ENCODE measurements at regions of chr11 and their contacts with region 1.

Region 1: DNA sequence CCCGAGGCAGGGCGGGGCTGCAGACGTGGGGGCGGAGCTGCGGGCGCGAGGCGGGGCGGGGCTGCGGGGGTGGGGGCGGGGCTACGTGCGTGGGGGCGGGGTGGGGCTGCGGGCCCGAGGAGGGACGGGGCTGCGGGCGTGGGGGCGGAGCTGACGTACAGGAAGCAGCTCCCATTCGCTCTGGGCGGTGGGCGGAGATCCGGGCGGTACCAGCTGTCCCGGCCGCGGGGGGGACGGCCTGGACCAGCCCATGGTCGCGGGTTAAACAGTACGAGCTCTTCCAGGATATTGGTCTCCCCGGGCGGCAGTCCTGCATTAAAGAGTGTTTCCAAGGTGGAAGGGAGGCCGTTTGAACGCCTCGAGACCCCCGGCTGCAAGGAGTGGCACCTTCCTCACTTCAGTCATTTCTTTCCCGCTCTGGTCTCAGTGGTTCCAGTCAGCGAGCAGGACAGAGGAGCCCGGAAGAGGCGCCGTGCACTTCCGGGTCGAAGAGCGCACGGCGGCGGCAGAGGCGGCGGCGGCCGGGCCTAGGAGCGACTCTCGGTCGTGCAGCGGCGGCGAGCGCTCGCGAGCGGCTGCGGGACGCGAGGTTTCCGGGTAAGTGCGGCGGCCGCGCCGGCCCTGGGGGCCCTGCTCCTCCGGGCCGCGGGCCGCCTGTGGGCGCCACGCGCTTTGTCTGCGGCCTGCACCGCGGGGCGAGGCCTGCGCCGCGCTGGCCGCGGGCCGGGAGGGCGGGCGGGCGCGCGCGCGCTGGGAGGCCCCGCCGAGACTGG is at the start of gene PHRF1:
- DNase-seq: peak; percentile 88
- ATAC-seq: peak; percentile 88
- H3K4me3 ChIP-seq: peak within 1 kb of the TSS; percentile 97 to 99
- H3K27ac ChIP-seq: peak within 1 kb of the TSS; percentile 90
- H3K4me1 ChIP-seq: peaks cover 13 to 34% of the 10 kb centered on the region in 2 experiments
- H3K27me3 ChIP-seq: no peaks in the 10 kb centered on the region
- CTCF ChIP-seq: no peak
- POLR2A ChIP-seq: peak; percentile 54
- RAD21 ChIP-seq: no peak
- total RNA-seq, gene PHRF1: 45.5 TPM

Region 2: DNA sequence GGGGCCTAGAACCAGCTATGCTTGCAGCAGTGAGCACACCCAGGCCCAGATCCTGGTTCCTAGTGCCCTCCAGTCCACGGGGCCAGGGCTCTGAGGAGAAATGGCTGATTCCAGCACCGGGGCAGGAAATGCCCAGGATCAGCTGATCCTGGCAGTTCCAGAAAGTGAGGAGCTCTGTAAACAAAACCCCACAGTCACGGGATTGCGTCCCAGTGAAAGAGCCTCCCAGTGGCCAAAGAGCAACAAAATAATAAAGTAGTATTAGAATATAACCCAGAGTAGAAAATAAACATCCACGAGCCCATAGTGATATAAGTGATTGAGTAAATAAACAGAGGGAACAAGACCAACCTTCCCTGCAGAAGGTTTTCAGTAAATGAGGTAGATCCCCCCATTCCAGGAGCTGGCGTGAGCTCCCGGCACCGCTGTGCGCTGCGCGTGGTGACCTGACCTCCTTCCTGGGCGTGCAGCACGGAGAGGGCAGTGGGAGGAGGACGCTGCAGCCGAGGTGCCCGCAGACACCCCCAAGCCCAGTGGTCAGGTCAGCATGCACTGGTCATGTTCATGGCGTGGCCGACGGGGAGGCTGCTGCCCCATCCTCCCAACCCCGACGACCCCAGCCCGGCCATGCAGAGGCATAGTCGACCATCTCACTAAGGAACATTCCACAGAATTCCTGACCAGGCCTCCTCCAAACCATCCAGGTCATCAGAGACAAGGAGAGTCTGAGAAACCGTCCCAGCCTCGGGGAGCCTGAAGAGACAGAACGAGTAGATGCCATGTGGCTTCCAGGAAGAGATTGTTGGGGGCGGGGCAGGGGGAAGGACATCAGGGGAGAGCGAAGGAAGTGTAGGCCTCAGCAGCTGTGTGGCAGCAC is 106.3 kb before region 1 on chr11:
- CTCF ChIA-PET with region 1: no interaction called
- POLR2A ChIA-PET with region 1: no interaction called
- RAD21 ChIA-PET with region 1: no interaction called
- intact Hi-C with region 1: no loop called
- DNase-seq: no peak
- ATAC-seq: no peak
- H3K4me3 ChIP-seq: no peak overlapping the region
- H3K27ac ChIP-seq: no peak overlapping the region
- H3K4me1 ChIP-seq: no peaks in the 10 kb centered on the region
- H3K27me3 ChIP-seq: no peaks in the 10 kb centered on the region
- CTCF ChIP-seq: no peak
- POLR2A ChIP-seq: no peak
- RAD21 ChIP-seq: no peak

Region 3: GRCh38 chr11:518463-519250 is 57.5 kb before region 1 on chr11:
- CTCF ChIA-PET with region 1: no interaction called
- POLR2A ChIA-PET with region 1: no interaction called
- RAD21 ChIA-PET with region 1: no interaction called
- intact Hi-C with region 1: no loop called
- DNase-seq: peak; percentile 85
- ATAC-seq: peak; percentile 97
- H3K4me3 ChIP-seq: no peak overlapping the region
- H3K27ac ChIP-seq: peak overlapping the region; percentile 66
- H3K4me1 ChIP-seq: peaks cover 4 to 5% of the 10 kb centered on the region in 2 experiments; a peak in 3 of 4 replicates
- H3K27me3 ChIP-seq: no peaks in the 10 kb centered on the region
- CTCF ChIP-seq: peak; percentile 75 to 98 (median 87)
- POLR2A ChIP-seq: no peak
- RAD21 ChIP-seq: peak; percentile 75

Region 4: DNA sequence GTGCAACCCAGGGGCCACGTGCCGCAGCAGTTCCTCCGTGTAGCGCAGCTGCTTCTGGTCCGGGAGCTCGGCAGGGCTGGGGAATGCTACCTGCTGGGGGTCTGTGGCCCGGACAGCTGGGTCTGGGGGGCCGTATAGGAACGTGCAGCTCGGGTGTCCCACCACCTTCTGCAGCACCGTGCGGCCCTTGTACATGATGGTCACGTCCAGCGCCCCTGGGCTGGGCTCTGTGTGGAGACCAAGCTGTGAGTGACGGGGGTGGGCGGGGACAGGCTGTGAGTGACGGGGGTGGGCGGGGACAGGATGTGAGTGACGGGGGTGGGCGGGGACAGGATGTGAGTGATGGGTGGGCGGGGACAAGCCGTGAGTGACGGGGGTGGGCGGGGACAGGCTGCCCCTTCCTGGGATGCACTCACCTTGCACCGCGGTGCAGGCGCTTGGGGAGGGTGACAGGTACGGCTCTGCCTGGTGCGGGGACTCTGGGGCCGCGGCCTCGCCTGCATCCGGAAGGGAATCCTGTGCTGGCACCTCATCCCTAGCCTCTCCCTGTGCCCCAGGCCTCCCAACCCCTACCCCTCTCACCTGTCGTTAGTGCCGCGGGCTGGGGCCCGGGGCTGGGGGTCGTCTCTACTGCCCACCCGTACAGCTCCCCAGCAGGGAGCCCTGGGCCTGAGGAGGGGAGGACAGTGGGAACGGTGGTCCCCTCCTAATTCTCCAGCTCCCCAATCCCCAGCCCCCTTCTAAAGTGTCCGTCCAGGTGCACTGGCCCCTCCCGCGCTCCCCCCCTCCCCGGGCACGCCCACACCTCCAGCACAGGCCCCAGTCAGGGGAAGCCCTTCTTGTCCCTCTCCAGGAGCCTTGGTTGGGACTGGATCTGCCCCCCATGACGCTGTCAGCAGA is 37.4 kb after region 1 on chr11:
- CTCF ChIA-PET with region 1: no interaction called
- POLR2A ChIA-PET with region 1: interaction called, 4 read pairs
- RAD21 ChIA-PET with region 1: no interaction called
- intact Hi-C with region 1: loop called (anchors 2 kb)
- DNase-seq: peak; percentile 59
- ATAC-seq: peak; percentile 40
- H3K4me3 ChIP-seq: no peak overlapping the region
- H3K27ac ChIP-seq: peak overlapping the region; percentile 69
- H3K4me1 ChIP-seq: peaks cover 8 to 42% of the 10 kb centered on the region in 2 experiments
- H3K27me3 ChIP-seq: no peaks in the 10 kb centered on the region
- CTCF ChIP-seq: no peak
- POLR2A ChIP-seq: no peak
- RAD21 ChIP-seq: no peak

Region 5: DNA sequence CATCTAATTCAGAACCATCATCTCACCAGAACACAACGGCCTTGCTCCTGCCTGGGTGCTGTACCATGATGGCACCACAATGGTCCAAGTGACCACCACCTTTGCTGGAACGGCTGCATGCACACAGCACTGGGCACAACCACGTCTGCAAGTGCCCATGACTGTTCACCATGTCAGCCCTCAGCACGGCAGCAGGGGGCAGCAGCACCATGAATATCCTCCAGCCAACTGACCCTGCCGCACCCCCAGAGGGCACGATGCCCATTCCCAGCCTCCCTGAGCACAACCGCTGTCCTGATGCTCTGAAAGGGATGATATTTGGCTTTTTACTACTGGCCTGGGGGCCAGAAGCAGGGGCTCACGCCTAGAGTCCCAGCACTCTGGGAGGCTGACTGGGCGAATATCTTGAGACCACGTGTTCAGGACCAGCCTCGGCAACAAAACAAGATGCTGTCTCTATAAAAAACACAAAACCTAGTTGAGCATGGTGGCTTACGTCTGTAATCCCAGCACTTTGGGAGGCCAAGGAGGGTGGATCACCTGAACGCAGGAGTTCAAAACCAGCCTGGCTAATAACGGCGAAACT is 86.6 kb after region 1 on chr11:
- CTCF ChIA-PET with region 1: no interaction called
- POLR2A ChIA-PET with region 1: no interaction called
- RAD21 ChIA-PET with region 1: no interaction called
- intact Hi-C with region 1: no loop called
- DNase-seq: peak; percentile 48
- ATAC-seq: peak; percentile 98
- H3K4me3 ChIP-seq: no peak overlapping the region
- H3K27ac ChIP-seq: no peak overlapping the region
- H3K4me1 ChIP-seq: no peaks in the 10 kb centered on the region
- H3K27me3 ChIP-seq: no peaks in the 10 kb centered on the region
- CTCF ChIP-seq: peak; percentile 85 to 90 (median 88)
- POLR2A ChIP-seq: no peak
- RAD21 ChIP-seq: peak; percentile 89

Measured in HCT116 (cell line).